ENCODE measurements at regions of chr3 and their contacts with region 1.

Region 1: GRCh38 chr3:8663177-8664061 is 18.8 kb upstream of the SSUH2 start:
- DNase-seq: peak; percentile 19 to 47
- ATAC-seq: no peak
- H3K4me3 ChIP-seq: no peak overlapping the region
- H3K27ac ChIP-seq: no peak overlapping the region
- H3K4me1 ChIP-seq: peaks cover 15 to 16% of the 10 kb centered on the region in 2 donors
- H3K27me3 ChIP-seq: no peaks in the 10 kb centered on the region
- CTCF ChIP-seq: peak; percentile 37 to 72 (median 58)
- POLR2A ChIP-seq: no peak

Region 2: GRCh38 chr3:8733332-8734094 is 70.1 kb after region 1 on chr3 and contains the start of gene CAV3:
- in situ Hi-C with region 1: no loop called
- intact Hi-C with region 1: loop called (anchors 5 kb)
- DNase-seq: peak; percentile 74 to 89
- ATAC-seq: peak; percentile 79 to 86
- H3K4me3 ChIP-seq: peak within 1 kb of the TSS; percentile 25 to 69 (median 52)
- H3K27ac ChIP-seq: peak within 1 kb of the TSS; percentile 89 to 98 (median 92)
- H3K4me1 ChIP-seq: peaks cover 23 to 44% of the 10 kb centered on the region in 2 donors
- H3K27me3 ChIP-seq: no peaks in the 10 kb centered on the region
- CTCF ChIP-seq: no peak
- POLR2A ChIP-seq: peak; percentile 36 to 41
- total RNA-seq, gene CAV3: 12.0 to 19.7 (median 14.3) TPM

Region 3: GRCh38 chr3:8755563-8756237 is 92.3 kb after region 1 on chr3:
- in situ Hi-C with region 1: loop called in 1 of 4 experiments (anchors 10 kb)
- intact Hi-C with region 1: no loop called
- DNase-seq: no peak
- ATAC-seq: no peak
- H3K4me3 ChIP-seq: no peak overlapping the region
- H3K27ac ChIP-seq: no peak overlapping the region
- H3K4me1 ChIP-seq: peaks cover 26 to 32% of the 10 kb centered on the region in 2 donors
- H3K27me3 ChIP-seq: no peaks in the 10 kb centered on the region
- CTCF ChIP-seq: peak in 1 of 5 experiments; percentile 13
- POLR2A ChIP-seq: no peak

Region 4: DNA sequence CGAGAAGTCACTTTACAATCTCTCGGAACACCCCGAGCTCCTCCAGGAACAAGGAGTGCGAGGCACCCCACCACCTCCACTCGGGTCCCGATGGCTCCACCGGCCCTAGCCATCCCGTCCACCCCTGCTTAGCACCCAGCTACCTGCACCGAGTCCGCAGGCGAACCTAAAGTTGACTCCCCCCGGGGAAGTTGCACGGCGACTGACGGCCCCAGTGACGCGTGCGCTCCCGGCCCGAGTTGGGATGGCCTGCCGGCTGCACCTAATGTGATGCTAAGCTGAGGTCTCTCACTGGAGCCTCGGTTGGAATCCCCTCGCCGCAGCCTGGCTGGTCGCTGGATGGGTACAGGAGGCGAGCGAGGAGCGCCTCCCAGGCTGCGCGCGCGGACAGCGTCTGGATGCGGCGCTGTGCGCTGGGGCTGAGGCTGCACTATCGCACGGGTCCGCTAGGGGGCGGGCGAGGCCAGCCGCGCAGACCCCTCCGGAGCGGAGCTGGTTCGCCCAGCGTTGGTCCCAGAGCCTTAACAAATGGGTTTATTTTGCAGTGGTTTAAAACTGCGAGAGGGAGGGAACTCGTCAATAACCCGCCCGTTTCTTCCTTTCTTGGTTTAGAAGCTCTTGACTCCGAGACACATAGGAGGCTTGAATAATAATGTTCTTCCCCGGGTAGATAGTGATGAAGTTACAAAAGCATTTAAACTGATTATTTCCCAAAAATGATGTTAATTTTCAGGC is 105.8 kb after region 1 on chr3 and contains the start of gene OXTR:
- in situ Hi-C with region 1: loop called in 1 of 4 experiments (anchors 10 kb)
- intact Hi-C with region 1: loop called (anchors 1 kb)
- DNase-seq: no peak
- ATAC-seq: peak; percentile 86 to 89
- H3K4me3 ChIP-seq: peak within 1 kb of the TSS; percentile 40 to 65 (median 50)
- H3K27ac ChIP-seq: no peak within 1 kb of the TSS
- H3K4me1 ChIP-seq: peaks cover 5 to 12% of the 10 kb centered on the region in 2 donors
- H3K27me3 ChIP-seq: peaks cover 19 to 35% (median 23%) of the 10 kb centered on the region in 3 donors
- CTCF ChIP-seq: peak; percentile 91 to 100 (median 97)
- POLR2A ChIP-seq: no peak
- total RNA-seq, gene OXTR: 0.20 TPM in 1 of 4 donors, not detected in the others

Region 5: GRCh38 chr3:8776406-8776805 is 113.0 kb after region 1 on chr3:
- in situ Hi-C with region 1: loop called in 1 of 4 experiments (anchors 10 kb)
- intact Hi-C with region 1: no loop called
- DNase-seq: no peak
- ATAC-seq: no peak
- H3K4me3 ChIP-seq: no peak overlapping the region
- H3K27ac ChIP-seq: no peak overlapping the region
- H3K4me1 ChIP-seq: no peaks in the 10 kb centered on the region
- H3K27me3 ChIP-seq: peaks cover 0 to 3% (median 0%) of the 10 kb centered on the region in 3 donors
- CTCF ChIP-seq: no peak
- POLR2A ChIP-seq: no peak

Region 6: DNA sequence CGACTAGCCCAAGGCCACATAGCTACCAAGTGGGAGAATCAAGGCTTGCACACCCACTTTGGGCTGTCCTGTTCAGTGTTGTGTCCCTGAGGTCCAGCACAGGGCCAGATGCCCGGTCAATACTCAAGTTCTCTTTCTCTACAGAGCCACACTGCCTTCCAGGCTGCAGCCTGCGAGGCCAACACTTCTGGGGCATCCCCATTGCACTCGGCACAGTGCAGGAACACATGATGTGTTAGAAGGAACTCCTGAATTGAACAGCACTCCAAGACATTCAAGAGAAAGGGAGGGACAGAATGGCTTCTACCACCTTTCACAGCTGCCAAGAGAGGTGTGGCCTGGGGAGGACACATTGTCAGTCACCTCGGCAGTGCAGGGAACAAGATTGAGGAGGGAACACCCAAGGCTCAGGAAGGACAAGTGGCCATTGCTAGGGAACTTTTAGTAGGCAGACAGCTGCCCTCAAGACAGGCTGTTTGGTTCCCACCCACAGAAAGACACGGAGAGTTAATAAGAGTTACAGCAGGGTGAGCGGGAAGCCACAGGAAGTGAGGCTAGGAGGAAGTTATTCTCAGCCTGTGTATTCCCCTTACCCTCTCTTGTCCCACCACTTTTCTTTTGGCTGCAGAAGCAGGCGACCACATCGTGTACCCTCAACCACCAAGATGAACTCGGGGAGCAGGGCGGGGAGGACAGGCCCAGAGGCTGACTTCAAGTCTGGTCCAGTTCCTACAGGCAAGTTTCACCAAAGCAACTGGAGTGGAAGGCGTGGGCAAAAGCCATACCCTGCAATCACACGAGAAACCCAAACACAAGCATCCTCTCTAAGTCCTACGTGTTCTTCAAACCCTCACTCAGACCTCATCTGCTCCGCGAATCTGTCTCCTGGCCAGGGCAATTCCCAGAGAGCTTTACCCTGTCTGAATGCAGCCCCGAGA is 516.7 kb after region 1 on chr3:
- in situ Hi-C with region 1: no loop called
- intact Hi-C with region 1: no loop called
- DNase-seq: no peak
- ATAC-seq: no peak
- H3K4me3 ChIP-seq: no peak overlapping the region
- H3K27ac ChIP-seq: no peak overlapping the region
- H3K4me1 ChIP-seq: peaks cover 10 to 25% of the 10 kb centered on the region in 2 donors
- H3K27me3 ChIP-seq: no peaks in the 10 kb centered on the region
- CTCF ChIP-seq: no peak
- POLR2A ChIP-seq: no peak

Measured in gastrocnemius medialis (tissue), 4 donors.